HepG2 (cell line): ENCODE measurements at regions of chr17 and their contacts with region 1.

Region 1: GRCh38 chr17:19546289-19547065 is 12.8 kb downstream of the SLC47A1 start:
- DNase-seq: no peak
- ATAC-seq: no peak
- H3K4me3 ChIP-seq: no peak overlapping the region
- H3K27ac ChIP-seq: peak overlapping the region; percentile 28
- H3K4me1 ChIP-seq: peaks cover 54% of the 10 kb centered on the region
- H3K27me3 ChIP-seq: no peaks in the 10 kb centered on the region
- CTCF ChIP-seq: peak; percentile 52
- EP300 ChIP-seq: no peak
- POLR2A ChIP-seq: no peak
- RAD21 ChIP-seq: 0 out of 2 replicates have a peak, but pooled peaks have one; percentile 52

Region 2: DNA sequence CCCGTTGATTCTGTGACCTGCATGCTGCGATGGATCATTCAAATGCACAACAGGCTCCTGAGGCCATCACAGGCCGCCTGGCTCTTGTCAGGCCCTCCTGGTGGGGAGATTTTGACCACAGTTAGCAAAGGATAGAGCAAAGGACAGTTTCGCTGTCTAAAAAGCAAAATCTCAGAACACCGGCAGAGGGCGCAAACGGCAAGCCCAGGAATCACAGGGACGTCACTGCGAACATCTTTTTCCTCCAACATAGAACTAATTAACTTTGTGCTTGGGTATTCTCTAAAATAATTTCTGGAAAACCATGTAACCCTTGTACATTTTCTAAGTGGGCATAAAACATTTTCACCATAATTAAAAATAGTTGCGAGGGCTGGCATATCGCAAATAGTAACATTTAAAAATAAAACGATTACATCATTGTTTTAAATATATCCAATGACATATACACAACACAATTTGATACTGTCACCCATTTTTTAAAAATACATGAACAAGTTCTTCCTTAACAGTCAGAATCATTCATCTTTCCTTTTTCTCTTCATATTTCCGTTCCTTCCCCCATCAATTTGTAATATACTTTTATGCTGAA is 32.5 kb before region 1 on chr17:
- CTCF ChIA-PET with region 1: no interaction called
- POLR2A ChIA-PET with region 1: no interaction called
- in situ Hi-C with region 1: no loop called
- intact Hi-C with region 1: loop called (anchors 1 kb)
- DNase-seq: peak; percentile 68
- ATAC-seq: peak; percentile 87
- H3K4me3 ChIP-seq: no peak overlapping the region
- H3K27ac ChIP-seq: no peak overlapping the region
- H3K4me1 ChIP-seq: peaks cover 58% of the 10 kb centered on the region
- H3K27me3 ChIP-seq: no peaks in the 10 kb centered on the region
- CTCF ChIP-seq: peak; percentile 92
- EP300 ChIP-seq: no peak
- POLR2A ChIP-seq: no peak
- RAD21 ChIP-seq: peak; percentile 90

Region 3: DNA sequence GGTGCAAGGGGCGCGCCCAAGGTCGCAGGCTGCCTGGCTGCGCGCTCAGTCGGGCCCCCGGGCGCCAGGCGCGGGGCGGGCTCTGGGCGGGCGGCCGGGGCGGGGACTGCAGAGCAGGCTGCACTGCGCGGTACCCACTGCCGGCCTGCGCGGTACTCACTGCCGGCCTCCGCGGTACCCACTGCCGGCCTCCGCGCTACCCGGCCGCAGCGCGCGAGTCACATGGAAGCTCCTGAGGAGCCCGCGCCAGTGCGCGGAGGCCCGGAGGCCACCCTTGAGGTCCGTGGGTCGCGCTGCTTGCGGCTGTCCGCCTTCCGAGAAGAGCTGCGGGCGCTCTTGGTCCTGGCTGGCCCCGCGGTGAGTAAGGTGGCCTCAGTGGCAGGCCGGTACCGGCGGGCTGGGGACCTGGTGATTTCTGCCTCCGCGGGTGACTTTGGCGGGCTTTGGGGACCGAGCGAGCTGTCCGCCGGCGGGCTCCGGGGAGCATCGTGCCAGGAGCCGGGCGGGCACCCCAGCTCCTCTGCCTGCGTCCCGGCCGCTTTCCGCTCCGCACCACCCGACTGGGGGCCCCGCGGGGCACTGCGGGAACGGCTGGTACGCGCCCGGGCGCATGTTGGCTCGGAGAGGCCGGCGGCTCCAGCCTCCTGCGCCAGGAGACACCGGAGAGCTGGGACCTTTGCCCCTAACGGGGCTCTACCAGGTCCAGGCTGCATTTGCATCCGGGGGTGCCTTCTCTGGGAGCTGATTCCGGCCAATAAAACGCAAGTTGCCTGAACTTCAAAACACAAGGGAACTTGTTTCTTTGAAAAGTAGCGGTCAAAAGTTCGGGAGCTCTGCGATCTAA is 12.5 kb before region 1 on chr17 and contains the start of gene SLC47A1:
- CTCF ChIA-PET with region 1: no interaction called
- POLR2A ChIA-PET with region 1: interaction called, 43 read pairs
- in situ Hi-C with region 1: no loop called
- intact Hi-C with region 1: loop called (anchors 1 kb)
- DNase-seq: peak; percentile 58
- ATAC-seq: peak; percentile 94
- H3K4me3 ChIP-seq: peak within 1 kb of the TSS; percentile 90 to 94 (median 91)
- H3K27ac ChIP-seq: peak within 1 kb of the TSS; percentile 94
- H3K4me1 ChIP-seq: peaks cover 70% of the 10 kb centered on the region
- H3K27me3 ChIP-seq: no peaks in the 10 kb centered on the region; a peak in 1 of 5 replicates
- CTCF ChIP-seq: no peak
- EP300 ChIP-seq: no peak
- POLR2A ChIP-seq: peak; percentile 48 to 68; a peak in 3 of 4 replicates
- RAD21 ChIP-seq: peak; percentile 42
- total RNA-seq, gene SLC47A1: 38.0 and 67.5 TPM in 2 replicates

Region 4: DNA sequence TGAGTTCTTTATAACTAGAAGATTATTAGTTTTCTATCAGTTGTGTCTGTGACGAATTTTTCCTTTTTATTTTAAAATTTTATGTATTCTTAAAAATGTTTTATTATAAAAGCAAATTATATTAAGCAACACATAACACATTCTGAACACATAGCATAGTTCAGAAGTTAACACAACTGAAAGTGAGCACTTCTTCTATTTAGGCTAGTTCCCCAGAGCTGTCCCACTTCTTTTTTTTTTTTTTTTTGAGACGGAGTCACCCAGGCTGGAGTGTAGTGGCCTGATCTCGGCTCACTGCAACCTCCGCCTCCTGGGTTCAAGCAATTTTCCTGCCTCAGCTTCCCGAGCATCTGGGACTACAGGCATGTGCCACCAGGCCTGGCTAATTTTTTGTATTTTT is 64.4 kb after region 1 on chr17:
- CTCF ChIA-PET with region 1: no interaction called
- POLR2A ChIA-PET with region 1: no interaction called
- in situ Hi-C with region 1: no loop called
- intact Hi-C with region 1: no loop called
- DNase-seq: no peak
- ATAC-seq: no peak
- H3K4me3 ChIP-seq: no peak overlapping the region
- H3K27ac ChIP-seq: no peak overlapping the region
- H3K4me1 ChIP-seq: no peaks in the 10 kb centered on the region
- H3K27me3 ChIP-seq: no peaks in the 10 kb centered on the region
- CTCF ChIP-seq: no peak
- EP300 ChIP-seq: no peak
- POLR2A ChIP-seq: no peak
- RAD21 ChIP-seq: no peak

Region 5: GRCh38 chr17:19664136-19664820 is 117.8 kb after region 1 on chr17:
- CTCF ChIA-PET with region 1: no interaction called
- POLR2A ChIA-PET with region 1: interaction called, 12 read pairs
- in situ Hi-C with region 1: no loop called
- intact Hi-C with region 1: no loop called
- DNase-seq: no peak
- ATAC-seq: no peak
- H3K4me3 ChIP-seq: no peak overlapping the region
- H3K27ac ChIP-seq: no peak overlapping the region
- H3K4me1 ChIP-seq: peaks cover 71% of the 10 kb centered on the region
- H3K27me3 ChIP-seq: no peaks in the 10 kb centered on the region
- CTCF ChIP-seq: no peak
- EP300 ChIP-seq: no peak
- POLR2A ChIP-seq: no peak
- RAD21 ChIP-seq: no peak